ENCODE measurements at regions of chr1 and their contacts with region 1.

Region 1: DNA sequence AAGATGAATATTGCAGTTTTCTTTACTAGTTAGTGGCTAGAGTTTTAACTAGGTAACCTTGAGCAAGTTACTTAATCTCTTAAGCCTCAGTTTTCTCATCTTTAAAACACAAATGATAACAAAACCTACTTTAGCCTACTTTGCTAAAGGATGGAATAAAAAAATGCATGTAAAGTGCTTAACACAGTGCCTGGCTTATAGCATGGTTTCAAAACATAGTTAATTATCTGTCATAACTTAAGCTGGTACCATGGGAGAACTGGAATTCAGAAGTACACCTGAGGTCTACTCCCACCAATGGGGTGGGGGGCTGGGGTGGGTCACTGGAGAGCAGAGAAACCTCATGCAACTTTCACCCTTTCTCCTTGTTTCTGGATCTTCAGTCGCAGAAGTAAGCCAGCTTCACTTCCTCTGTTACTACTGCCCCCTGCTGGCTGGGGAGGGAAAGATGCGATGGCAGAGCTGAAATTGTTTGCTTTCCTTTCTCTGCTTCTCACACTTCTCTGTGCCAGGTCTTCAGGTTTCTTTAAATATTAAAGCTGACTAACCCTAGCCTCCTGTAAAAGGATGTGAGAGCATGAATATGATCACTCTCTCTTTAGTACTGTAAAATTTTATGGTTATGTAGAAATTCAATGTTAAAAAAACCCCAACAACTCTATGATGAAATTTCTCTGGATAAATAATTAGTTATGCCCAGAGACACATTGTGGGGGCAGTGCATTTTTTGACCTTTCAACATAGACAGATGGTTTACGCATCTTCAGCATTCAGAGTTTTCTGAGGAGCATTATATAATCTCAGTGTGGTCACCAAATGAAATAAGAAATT is 324.2 kb downstream of the HLX start:
- DNase-seq: peak; percentile 70
- ATAC-seq: no peak
- H3K4me3 Mint-ChIP-seq: no peak overlapping the region
- H3K27ac Mint-ChIP-seq: no peak overlapping the region
- H3K4me1 Mint-ChIP-seq: peaks cover 2% of the 10 kb centered on the region
- H3K27me3 Mint-ChIP-seq: peaks cover 5% of the 10 kb centered on the region

Region 2: GRCh38 chr1:220810179-220810653 is 393.2 kb before region 1 on chr1:
- CTCF ChIA-PET with region 1: interaction called, 12 read pairs
- DNase-seq: peak; percentile 79
- ATAC-seq: peak; percentile 88
- H3K4me3 Mint-ChIP-seq: peak overlapping the region; percentile 37
- H3K27ac Mint-ChIP-seq: no peak overlapping the region
- H3K4me1 Mint-ChIP-seq: peaks cover 6% of the 10 kb centered on the region
- H3K27me3 Mint-ChIP-seq: peaks cover 10% of the 10 kb centered on the region

Region 3: DNA sequence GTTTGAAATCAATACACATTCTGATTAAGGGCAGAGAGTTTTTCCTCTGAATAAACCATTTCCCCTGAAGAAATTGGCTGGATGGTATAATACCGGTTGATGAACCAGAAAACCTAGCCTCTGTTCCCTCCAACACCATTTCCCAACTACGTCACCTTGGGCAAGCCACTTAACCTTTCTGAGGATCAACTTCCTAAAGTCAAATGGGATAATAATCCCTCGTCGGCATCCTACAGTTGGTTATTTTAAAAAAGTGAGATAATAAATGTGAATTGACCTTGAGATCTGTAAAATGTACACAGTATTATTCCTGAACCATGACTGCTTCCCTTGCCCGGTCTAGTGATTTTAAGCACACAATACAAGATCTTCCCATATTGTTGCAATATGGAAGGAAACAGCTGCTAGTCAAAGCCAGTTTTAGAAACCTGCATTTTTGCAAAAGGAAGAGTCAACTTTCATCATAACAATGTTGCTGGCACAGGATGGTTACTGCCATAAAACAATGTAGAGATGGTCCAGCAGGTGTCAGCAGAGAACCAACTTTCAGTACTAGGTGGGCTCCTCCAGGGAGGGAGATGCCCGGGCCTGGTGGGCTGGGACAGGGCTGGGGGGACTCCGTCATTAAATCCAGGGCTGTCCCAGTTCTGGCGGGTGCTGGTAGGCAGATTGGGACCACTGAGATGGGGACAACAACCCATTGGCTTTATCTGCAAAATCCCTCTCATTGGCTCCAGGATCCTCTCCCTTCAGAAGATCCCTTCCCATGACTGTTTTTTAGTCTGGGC is 329.4 kb before region 1 on chr1:
- CTCF ChIA-PET with region 1: interaction called, 11 read pairs
- DNase-seq: no peak
- ATAC-seq: no peak
- H3K4me3 Mint-ChIP-seq: no peak overlapping the region
- H3K27ac Mint-ChIP-seq: no peak overlapping the region
- H3K4me1 Mint-ChIP-seq: peaks cover 19% of the 10 kb centered on the region
- H3K27me3 Mint-ChIP-seq: peaks cover 60% of the 10 kb centered on the region

Region 4: GRCh38 chr1:221180704-221181368 is 22.6 kb before region 1 on chr1:
- CTCF ChIA-PET with region 1: no interaction called
- DNase-seq: no peak
- ATAC-seq: no peak
- H3K4me3 Mint-ChIP-seq: no peak overlapping the region
- H3K27ac Mint-ChIP-seq: no peak overlapping the region
- H3K4me1 Mint-ChIP-seq: no peaks in the 10 kb centered on the region
- H3K27me3 Mint-ChIP-seq: peaks cover 5% of the 10 kb centered on the region

Region 5: DNA sequence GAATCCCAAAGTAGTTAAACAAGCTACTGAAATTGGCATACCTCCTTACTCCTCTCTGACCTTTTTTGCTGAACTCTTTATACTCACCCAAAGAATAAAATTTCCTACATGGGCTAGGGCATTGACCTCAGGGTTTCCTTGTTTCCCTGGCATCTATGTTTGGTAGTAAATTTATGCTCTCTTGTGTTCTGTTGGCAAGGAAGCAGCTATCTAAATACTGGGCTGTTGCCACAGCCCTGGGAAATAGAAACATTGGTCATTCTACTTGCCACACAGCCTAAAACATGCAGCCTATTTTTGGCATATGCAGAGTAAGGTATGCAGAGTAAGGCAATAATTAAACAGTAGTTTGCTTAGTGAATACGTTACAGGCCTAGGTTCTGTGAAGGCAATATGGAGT is 27.2 kb after region 1 on chr1:
- CTCF ChIA-PET with region 1: no interaction called
- DNase-seq: no peak
- ATAC-seq: no peak
- H3K4me3 Mint-ChIP-seq: no peak overlapping the region
- H3K27ac Mint-ChIP-seq: no peak overlapping the region
- H3K4me1 Mint-ChIP-seq: no peaks in the 10 kb centered on the region
- H3K27me3 Mint-ChIP-seq: no peaks in the 10 kb centered on the region

Measured in activated CD8-positive, alpha-beta memory T cell treated with anti-CD3 and anti-CD28 coated beads, Interleukin-2, amount 10 ng/mL, durations not matched to agents 7 days and 5 days (primary cell).